H1 (cell line): ENCODE measurements at regions of chr3 and their contacts with region 1.

Region 1: GRCh38 chr3:134754768-134755559 is 40.1 kb upstream of the EPHB1 start:
- DNase-seq: peak; percentile 19 to 81
- H3K4me3 ChIP-seq: no peak overlapping the region
- H3K27ac ChIP-seq: no peak overlapping the region
- H3K4me1 ChIP-seq: no peaks in the 10 kb centered on the region
- H3K27me3 ChIP-seq: no peaks in the 10 kb centered on the region; a peak in 1 of 7 replicates
- CTCF ChIP-seq: peak; percentile 83 to 87 (median 85)
- EP300 ChIP-seq: no peak
- POLR2A ChIP-seq: no peak
- RAD21 ChIP-seq: peak; percentile 62 to 71

Region 2: GRCh38 chr3:134423153-134423552 is 331.8 kb before region 1 on chr3:
- CTCF ChIA-PET with region 1: no interaction called
- POLR2A ChIA-PET with region 1: no interaction called
- DNase-seq: no peak
- H3K4me3 ChIP-seq: no peak overlapping the region
- H3K27ac ChIP-seq: no peak overlapping the region
- H3K4me1 ChIP-seq: peaks cover 0 to 7% (median 5%) of the 10 kb centered on the region in 4 experiments; a peak in 4 of 7 replicates
- H3K27me3 ChIP-seq: no peaks in the 10 kb centered on the region
- CTCF ChIP-seq: no peak
- EP300 ChIP-seq: no peak
- POLR2A ChIP-seq: no peak
- RAD21 ChIP-seq: no peak

Region 3: DNA sequence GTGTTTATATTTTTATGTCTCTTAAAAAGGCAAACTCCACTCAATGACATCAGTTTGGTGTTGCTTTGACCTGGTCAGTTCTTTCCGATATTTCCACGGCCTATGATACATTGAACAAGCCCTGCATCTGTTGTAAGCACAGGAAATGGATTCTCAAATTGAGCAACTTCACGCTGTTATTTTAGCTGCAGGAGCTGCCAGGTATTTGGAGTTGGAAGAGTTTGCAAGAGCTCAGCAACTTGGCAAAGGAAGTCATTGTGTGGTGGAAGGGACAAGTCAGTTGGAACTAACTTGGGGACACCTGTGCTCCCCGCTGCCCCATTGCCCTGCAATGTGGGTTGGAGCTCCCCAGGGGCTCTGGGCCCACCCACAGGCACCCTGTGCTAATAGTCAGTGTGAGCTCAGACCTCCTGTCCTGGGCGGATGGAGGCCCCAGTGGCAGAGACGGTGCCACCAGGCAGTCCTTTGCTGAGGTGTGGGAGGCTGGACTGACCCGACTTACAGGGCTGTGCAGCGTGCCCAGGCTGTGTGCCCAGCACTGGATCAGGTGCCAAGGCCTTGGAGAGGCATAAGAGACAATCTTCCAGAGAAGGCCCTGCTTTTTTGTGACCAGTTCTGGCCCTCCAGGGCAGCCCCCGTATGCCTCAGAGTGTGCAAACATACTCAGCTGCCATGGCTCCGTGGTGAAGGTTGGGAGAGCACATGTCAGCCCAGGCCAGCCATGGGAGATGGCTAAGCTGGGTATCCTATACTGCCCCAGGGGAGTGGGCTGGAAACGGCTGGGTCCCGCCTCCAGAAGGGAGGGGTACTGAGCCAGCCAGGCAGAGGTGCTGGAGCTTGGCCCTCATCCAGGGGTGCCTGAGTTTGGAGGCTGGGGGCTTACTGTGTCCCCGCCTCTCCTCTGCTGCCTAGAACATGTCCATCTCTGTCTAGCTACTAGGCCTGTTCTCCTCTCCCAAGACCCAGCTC is 147.6 kb before region 1 on chr3:
- CTCF ChIA-PET with region 1: interaction called, 81 read pairs
- POLR2A ChIA-PET with region 1: no interaction called
- DNase-seq: no peak
- H3K4me3 ChIP-seq: no peak overlapping the region
- H3K27ac ChIP-seq: no peak overlapping the region
- H3K4me1 ChIP-seq: peaks cover 0 to 4% (median under 1%) of the 10 kb centered on the region in 4 experiments; a peak in 3 of 7 replicates
- H3K27me3 ChIP-seq: peaks cover 0 to 2% (median 0%) of the 10 kb centered on the region in 4 experiments; a peak in 2 of 7 replicates
- CTCF ChIP-seq: no peak
- EP300 ChIP-seq: no peak
- POLR2A ChIP-seq: no peak
- RAD21 ChIP-seq: no peak

Region 4: GRCh38 chr3:134663721-134664456 is 91.1 kb before region 1 on chr3:
- CTCF ChIA-PET with region 1: interaction called, 10 read pairs
- POLR2A ChIA-PET with region 1: no interaction called
- DNase-seq: no peak
- H3K4me3 ChIP-seq: no peak overlapping the region
- H3K27ac ChIP-seq: no peak overlapping the region
- H3K4me1 ChIP-seq: peaks cover 0 to 5% (median 3%) of the 10 kb centered on the region in 4 experiments; a peak in 3 of 7 replicates
- H3K27me3 ChIP-seq: peaks cover 0 to 2% (median 0%) of the 10 kb centered on the region in 4 experiments; a peak in 2 of 7 replicates
- CTCF ChIP-seq: no peak
- EP300 ChIP-seq: no peak
- POLR2A ChIP-seq: no peak
- RAD21 ChIP-seq: no peak

Region 5: DNA sequence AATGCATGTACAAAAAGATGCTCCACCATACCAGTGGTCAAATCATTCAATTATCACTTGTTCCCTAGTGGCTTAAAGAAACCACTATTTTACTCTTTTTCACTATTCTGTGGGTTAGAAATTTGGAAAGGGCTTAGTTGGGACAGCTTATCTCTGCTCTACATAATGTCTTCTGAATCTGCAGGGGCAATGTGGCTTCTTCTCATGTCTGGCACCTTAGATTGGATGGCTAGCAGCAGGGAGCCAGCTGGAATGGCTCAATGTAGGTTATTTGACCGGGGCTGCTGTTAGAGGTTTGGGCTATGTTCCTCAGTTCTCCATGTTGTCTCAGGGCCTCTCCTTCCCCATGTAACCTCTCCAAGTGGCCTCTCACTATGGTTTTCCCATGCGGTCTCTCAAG is 17.4 kb before region 1 on chr3:
- CTCF ChIA-PET with region 1: interaction called, 29 read pairs
- POLR2A ChIA-PET with region 1: no interaction called
- DNase-seq: no peak
- H3K4me3 ChIP-seq: no peak overlapping the region
- H3K27ac ChIP-seq: no peak overlapping the region
- H3K4me1 ChIP-seq: no peaks in the 10 kb centered on the region
- H3K27me3 ChIP-seq: peaks cover 0 to 2% (median 0%) of the 10 kb centered on the region in 4 experiments; a peak in 1 of 7 replicates
- CTCF ChIP-seq: no peak
- EP300 ChIP-seq: no peak
- POLR2A ChIP-seq: no peak
- RAD21 ChIP-seq: no peak

Region 6: DNA sequence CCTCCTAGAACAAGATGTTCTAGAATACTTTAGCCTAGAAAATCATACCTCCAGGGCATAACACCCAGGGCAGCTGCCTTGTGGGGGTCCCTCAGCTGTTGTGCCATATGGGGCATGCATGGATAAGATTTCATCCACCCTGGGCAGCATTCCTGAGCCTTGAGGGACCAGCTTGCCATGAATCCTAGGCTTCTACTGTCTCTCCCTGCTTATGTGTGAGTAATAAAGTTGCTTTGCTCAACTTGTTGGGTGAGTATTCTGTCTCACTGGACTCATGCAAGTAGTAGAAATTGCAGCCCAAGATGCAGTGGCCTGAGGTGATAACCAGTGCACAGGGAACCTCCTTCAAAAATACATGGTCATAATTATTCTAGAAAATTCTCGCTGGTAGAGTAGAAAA is 12.0 kb before region 1 on chr3:
- CTCF ChIA-PET with region 1: interaction called, 29 read pairs
- POLR2A ChIA-PET with region 1: no interaction called
- DNase-seq: no peak
- H3K4me3 ChIP-seq: no peak overlapping the region
- H3K27ac ChIP-seq: no peak overlapping the region
- H3K4me1 ChIP-seq: no peaks in the 10 kb centered on the region
- H3K27me3 ChIP-seq: peaks cover 0 to 2% (median 0%) of the 10 kb centered on the region in 4 experiments; a peak in 1 of 7 replicates
- CTCF ChIP-seq: no peak
- EP300 ChIP-seq: no peak
- POLR2A ChIP-seq: no peak
- RAD21 ChIP-seq: no peak

Region 7: GRCh38 chr3:134769287-134769868 is 14.4 kb after region 1 on chr3:
- CTCF ChIA-PET with region 1: interaction called, 44 read pairs
- POLR2A ChIA-PET with region 1: no interaction called
- DNase-seq: no peak
- H3K4me3 ChIP-seq: no peak overlapping the region
- H3K27ac ChIP-seq: no peak overlapping the region
- H3K4me1 ChIP-seq: no peaks in the 10 kb centered on the region
- H3K27me3 ChIP-seq: no peaks in the 10 kb centered on the region
- CTCF ChIP-seq: no peak
- EP300 ChIP-seq: no peak
- POLR2A ChIP-seq: no peak
- RAD21 ChIP-seq: no peak

Region 8: GRCh38 chr3:134852893-134853351 is 98.0 kb after region 1 on chr3:
- CTCF ChIA-PET with region 1: no interaction called
- POLR2A ChIA-PET with region 1: no interaction called
- DNase-seq: no peak
- H3K4me3 ChIP-seq: no peak overlapping the region
- H3K27ac ChIP-seq: no peak overlapping the region
- H3K4me1 ChIP-seq: peaks cover 0 to 7% (median 3%) of the 10 kb centered on the region in 4 experiments; a peak in 2 of 7 replicates
- H3K27me3 ChIP-seq: no peaks in the 10 kb centered on the region
- CTCF ChIP-seq: no peak
- EP300 ChIP-seq: no peak
- POLR2A ChIP-seq: no peak
- RAD21 ChIP-seq: no peak